Naive thymus-derived CD4-positive, alpha-beta T cell (primary cell): ENCODE measurements at regions of chr1 and their contacts with region 1.

Region 1: GRCh38 chr1:106200711-106201110 is 855.8 kb upstream of the PRMT6 start:
- DNase-seq: no peak
- ATAC-seq: no peak
- H3K4me3 ChIP-seq: no peak overlapping the region
- H3K4me3 Mint-ChIP-seq: no peak overlapping the region
- H3K27ac ChIP-seq: no peak overlapping the region
- H3K27ac Mint-ChIP-seq: no peak overlapping the region
- H3K4me1 ChIP-seq: no peaks in the 10 kb centered on the region
- H3K4me1 Mint-ChIP-seq: no peaks in the 10 kb centered on the region
- H3K27me3 ChIP-seq: no peaks in the 10 kb centered on the region
- H3K27me3 Mint-ChIP-seq: no peaks in the 10 kb centered on the region

Region 2: GRCh38 chr1:106072909-106073600 is 127.7 kb before region 1 on chr1:
- CTCF ChIA-PET with region 1: no interaction called
- POLR2A ChIA-PET with region 1: no interaction called
- intact Hi-C with region 1: no loop called
- DNase-seq: no peak
- ATAC-seq: no peak
- H3K4me3 ChIP-seq: no peak overlapping the region
- H3K4me3 Mint-ChIP-seq: no peak overlapping the region
- H3K27ac ChIP-seq: no peak overlapping the region
- H3K27ac Mint-ChIP-seq: no peak overlapping the region
- H3K4me1 ChIP-seq: no peaks in the 10 kb centered on the region
- H3K4me1 Mint-ChIP-seq: no peaks in the 10 kb centered on the region
- H3K27me3 ChIP-seq: no peaks in the 10 kb centered on the region
- H3K27me3 Mint-ChIP-seq: no peaks in the 10 kb centered on the region

Region 3: DNA sequence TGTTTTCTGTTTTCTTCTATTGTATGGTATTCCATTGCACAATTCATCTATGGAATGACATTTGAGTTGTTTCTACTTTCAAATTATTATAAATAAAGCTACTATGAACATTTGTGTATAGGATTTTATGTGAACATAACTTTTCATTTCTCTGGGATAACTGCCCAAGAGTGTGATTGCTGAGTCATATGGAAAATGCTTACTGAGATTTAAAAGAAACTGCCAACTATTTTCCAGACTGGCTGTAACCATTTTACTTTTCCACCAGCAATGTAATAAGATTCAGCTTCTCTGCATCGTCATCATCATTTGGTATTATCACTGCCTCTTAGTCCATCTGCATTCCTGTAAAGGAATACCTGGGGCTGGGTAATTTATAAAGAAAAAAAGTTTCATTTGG is 76.2 kb after region 1 on chr1:
- CTCF ChIA-PET with region 1: no interaction called
- POLR2A ChIA-PET with region 1: no interaction called
- intact Hi-C with region 1: loop called in 1 of 2 experiments (anchors 10 kb)
- DNase-seq: no peak
- ATAC-seq: no peak
- H3K4me3 ChIP-seq: no peak overlapping the region
- H3K4me3 Mint-ChIP-seq: no peak overlapping the region
- H3K27ac ChIP-seq: no peak overlapping the region
- H3K27ac Mint-ChIP-seq: no peak overlapping the region
- H3K4me1 ChIP-seq: no peaks in the 10 kb centered on the region
- H3K4me1 Mint-ChIP-seq: no peaks in the 10 kb centered on the region
- H3K27me3 ChIP-seq: no peaks in the 10 kb centered on the region
- H3K27me3 Mint-ChIP-seq: no peaks in the 10 kb centered on the region